ENCODE measurements at regions of chr6 and their contacts with region 1.

Region 1: GRCh38 chr6:108558372-108559096 is 2.2 kb upstream of the FOXO3 start:
- DNase-seq: peak; percentile 97 to 98
- H3K4me3 ChIP-seq: peak overlapping the region; percentile 77
- H3K4me3 Mint-ChIP-seq: peak overlapping the region; percentile 95
- H3K27ac Mint-ChIP-seq: peak overlapping the region; percentile 94
- H3K4me1 ChIP-seq: peaks cover 15% of the 10 kb centered on the region
- H3K4me1 Mint-ChIP-seq: peaks cover 27% of the 10 kb centered on the region
- H3K27me3 ChIP-seq: no peaks in the 10 kb centered on the region
- H3K27me3 Mint-ChIP-seq: no peaks in the 10 kb centered on the region
- CTCF ChIP-seq: no peak

Region 2: GRCh38 chr6:108541838-108542759 is 16.4 kb before region 1 on chr6:
- CTCF ChIA-PET with region 1: interaction called, 14 read pairs
- POLR2A ChIA-PET with region 1: no interaction called
- intact Hi-C with region 1: no loop called
- DNase-seq: peak; percentile 67 to 74
- H3K4me3 ChIP-seq: peak overlapping the region; percentile 1; the same call in 1 of the 2 replicates
- H3K4me3 Mint-ChIP-seq: peak overlapping the region; percentile 55
- H3K27ac Mint-ChIP-seq: no peak overlapping the region
- H3K4me1 ChIP-seq: no peaks in the 10 kb centered on the region
- H3K4me1 Mint-ChIP-seq: no peaks in the 10 kb centered on the region
- H3K27me3 ChIP-seq: no peaks in the 10 kb centered on the region
- H3K27me3 Mint-ChIP-seq: no peaks in the 10 kb centered on the region
- CTCF ChIP-seq: peak; percentile 76 to 85

Region 3: DNA sequence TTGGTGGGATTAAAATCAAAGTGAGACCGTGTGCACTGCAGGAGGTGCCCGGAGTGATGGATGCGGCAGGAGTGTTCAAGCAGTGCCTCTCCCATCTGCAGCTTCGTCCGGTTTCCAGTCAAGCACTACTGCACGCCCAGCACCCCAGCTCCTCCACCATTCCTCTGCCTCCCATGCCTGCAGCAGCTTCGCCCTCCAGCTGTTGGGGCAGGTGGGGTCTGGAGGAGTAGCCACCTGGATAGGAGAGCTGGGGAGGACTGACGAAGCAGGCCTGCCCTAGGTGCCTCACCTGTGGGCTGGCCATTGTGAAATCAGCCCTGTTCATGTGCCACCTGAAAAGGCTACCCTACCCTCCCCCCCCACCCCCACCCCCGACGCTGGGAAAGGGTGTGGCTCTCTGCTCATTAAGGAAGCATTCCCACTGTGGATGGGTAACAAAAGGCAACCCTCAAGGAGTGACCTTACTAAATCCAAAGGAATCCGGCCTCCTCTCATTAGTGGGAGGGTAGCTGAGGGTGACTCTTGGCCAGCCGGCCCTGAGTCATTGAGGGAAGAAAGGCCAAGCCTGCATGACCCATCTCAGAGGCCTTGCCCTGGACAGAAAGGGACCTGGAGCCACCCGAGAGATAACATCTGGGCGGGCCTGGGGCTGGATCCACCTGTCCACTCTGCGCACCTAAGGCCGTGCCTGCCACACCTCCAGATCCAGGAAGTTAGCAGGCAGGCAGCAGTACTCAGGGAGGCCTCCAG is 173.8 kb after region 1 on chr6:
- CTCF ChIA-PET with region 1: no interaction called
- POLR2A ChIA-PET with region 1: interaction called, 4 read pairs
- intact Hi-C with region 1: loop called (anchors 2 kb)
- DNase-seq: peak; percentile 45 to 81
- H3K4me3 ChIP-seq: no peak overlapping the region
- H3K4me3 Mint-ChIP-seq: no peak overlapping the region
- H3K27ac Mint-ChIP-seq: peak overlapping the region; percentile 55
- H3K4me1 ChIP-seq: peaks cover 69% of the 10 kb centered on the region
- H3K4me1 Mint-ChIP-seq: peaks cover 54% of the 10 kb centered on the region
- H3K27me3 ChIP-seq: no peaks in the 10 kb centered on the region
- H3K27me3 Mint-ChIP-seq: no peaks in the 10 kb centered on the region
- CTCF ChIP-seq: no peak

Region 4: DNA sequence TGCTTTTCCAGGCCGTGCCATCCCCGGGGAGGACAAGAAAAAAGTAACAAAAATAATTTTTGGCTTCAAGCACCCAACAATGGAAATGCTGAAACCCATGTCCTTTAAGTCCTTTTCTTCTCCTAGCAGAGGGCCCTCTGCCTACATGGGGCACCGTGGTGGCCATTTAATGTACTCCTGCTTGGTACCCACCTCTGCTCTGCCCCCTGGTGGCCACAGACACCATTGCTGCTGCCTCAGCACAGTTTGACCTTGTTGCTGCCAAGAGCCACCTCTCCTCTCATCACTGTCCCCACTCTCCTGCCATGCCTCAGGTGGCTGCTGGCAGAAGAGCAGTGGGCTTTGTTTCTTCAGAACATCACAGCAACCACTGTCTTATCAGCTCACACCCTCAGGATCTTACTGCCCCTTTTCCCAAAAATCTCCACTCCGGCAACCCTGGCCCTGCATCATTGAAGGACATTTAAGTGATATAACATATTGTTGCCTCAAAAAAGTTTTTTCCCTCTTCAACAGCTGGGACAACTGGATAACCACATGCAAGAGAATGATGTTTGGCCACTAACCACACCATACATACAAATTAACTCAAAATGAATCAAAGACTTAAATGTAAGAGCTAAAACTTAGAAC is 276.8 kb after region 1 on chr6:
- CTCF ChIA-PET with region 1: no interaction called
- POLR2A ChIA-PET with region 1: interaction called, 3 read pairs
- intact Hi-C with region 1: loop called (anchors 5 kb)
- DNase-seq: peak; percentile 79 to 85
- H3K4me3 ChIP-seq: no peak overlapping the region
- H3K4me3 Mint-ChIP-seq: no peak overlapping the region
- H3K27ac Mint-ChIP-seq: no peak overlapping the region
- H3K4me1 ChIP-seq: no peaks in the 10 kb centered on the region
- H3K4me1 Mint-ChIP-seq: no peaks in the 10 kb centered on the region
- H3K27me3 ChIP-seq: no peaks in the 10 kb centered on the region
- H3K27me3 Mint-ChIP-seq: no peaks in the 10 kb centered on the region
- CTCF ChIP-seq: peak; percentile 87 to 89

Region 5: DNA sequence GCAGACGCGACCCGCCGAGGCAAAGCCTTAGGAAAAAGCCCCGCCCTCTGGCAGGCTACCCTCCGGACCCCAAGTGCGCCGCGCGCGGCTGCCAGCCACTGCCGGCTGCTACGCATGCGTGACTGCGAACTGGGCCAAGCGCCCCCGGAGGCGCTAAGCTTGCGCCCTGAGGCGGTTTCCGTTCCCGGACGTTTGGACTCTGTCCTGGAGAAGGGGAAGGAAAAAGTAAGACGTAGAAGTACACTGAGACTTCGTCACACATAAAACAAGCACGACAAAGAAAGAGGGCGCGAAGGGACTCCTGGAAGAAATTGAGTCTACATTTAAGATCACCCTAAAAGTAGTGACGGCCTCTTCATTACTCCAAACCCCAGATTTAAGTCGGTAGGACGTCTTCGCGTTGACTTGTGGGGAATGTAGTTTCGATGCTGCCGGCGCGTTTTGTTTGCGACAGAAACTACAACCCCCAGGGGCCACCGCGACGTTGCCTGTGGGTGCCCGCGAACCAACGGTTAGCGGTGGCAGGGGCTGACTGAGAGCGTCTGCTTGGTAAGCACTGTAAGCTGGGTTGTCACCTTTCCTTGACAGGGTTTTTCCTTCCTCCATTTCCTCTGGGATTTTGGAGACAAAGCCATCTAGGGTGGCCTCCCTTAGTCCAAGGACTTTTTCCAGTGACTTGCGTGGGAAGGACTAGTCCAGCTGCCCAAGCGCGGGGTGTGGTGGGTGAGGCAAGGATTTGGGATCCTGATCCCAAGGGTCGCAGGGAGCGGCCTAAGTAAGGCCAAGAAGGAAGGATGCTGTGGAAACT is 536.7 kb after region 1 on chr6 and contains the start of gene CEP57L1:
- CTCF ChIA-PET with region 1: interaction called, 5 read pairs
- POLR2A ChIA-PET with region 1: interaction called, 5 read pairs
- intact Hi-C with region 1: loop called (anchors 2 kb)
- DNase-seq: peak; percentile 98 to 99
- H3K4me3 ChIP-seq: peak within 1 kb of the TSS; percentile 63
- H3K4me3 Mint-ChIP-seq: peak within 1 kb of the TSS; percentile 97
- H3K27ac Mint-ChIP-seq: peak within 1 kb of the TSS; percentile 100
- H3K4me1 ChIP-seq: peaks cover 7% of the 10 kb centered on the region; the same call in 1 of the 2 replicates
- H3K4me1 Mint-ChIP-seq: peaks cover 15% of the 10 kb centered on the region
- H3K27me3 ChIP-seq: no peaks in the 10 kb centered on the region
- H3K27me3 Mint-ChIP-seq: no peaks in the 10 kb centered on the region
- CTCF ChIP-seq: no peak
- total RNA-seq, gene CEP57L1: 11.0 and 12.7 TPM in 2 replicates